Activated B cell treated with CpG ODN at 0.5 μM for 24 hours (primary cell): ENCODE measurements at regions of chr16 and their contacts with region 1.

Region 1: DNA sequence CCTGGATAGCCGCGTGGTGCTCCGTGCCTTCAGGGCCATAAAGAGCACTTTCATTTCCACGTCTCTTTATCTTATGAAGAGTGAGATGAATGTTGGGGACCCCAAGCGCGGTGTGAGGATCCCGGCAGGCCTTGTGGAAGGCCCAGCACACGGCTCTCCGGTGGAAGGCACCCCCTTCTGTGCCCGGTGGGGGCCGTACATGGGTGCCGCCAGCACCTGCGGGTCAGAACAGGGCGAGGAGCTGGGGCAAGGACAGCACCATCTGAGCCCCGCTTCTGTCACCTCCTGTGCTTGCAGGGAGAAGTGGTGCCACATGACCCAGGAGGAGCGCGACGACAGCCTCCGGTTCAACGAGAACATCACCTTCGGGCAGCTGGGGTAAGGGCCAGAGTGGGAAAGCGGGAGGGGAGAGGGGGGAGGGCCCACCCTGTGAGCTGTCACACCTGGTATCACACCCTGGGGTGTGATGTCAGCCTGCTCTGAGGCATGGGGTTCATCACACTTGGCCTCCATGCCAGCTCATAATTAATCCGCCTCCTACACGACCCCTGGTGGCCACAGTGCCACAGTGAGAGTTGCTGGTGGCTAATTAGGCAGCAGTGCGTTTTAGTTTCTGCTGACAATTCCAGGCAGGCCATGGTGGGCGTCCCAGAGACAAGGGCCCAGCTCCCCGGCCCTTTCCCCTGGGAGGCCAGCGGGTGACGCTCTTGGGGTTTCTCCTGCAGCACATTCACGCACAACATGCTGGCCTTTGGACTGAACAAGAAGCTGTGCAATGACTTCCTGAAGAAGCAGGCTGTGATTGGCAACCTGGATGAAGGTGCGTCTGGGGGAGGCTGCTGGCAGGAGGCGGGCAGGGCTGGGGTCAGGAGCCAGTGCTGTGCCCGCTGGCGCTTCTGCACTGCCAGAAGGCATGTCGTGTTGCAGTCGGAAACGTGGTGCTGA is 25.7 kb downstream of the CIBAR2 start:
- DNase-seq: peak; percentile 54
- ATAC-seq: peak; percentile 83
- H3K4me3 Mint-ChIP-seq: no peak overlapping the region
- H3K27ac Mint-ChIP-seq: no peak overlapping the region
- H3K4me1 Mint-ChIP-seq: peaks cover 27% of the 10 kb centered on the region
- H3K27me3 Mint-ChIP-seq: peaks cover 17% of the 10 kb centered on the region
- CTCF ChIP-seq: no peak

Region 2: GRCh38 chr16:84754353-84754856 is 332.2 kb before region 1 on chr16:
- CTCF ChIA-PET with region 1: no interaction called
- POLR2A ChIA-PET with region 1: no interaction called
- intact Hi-C with region 1: loop called (anchors 5 kb)
- DNase-seq: no peak
- ATAC-seq: peak; percentile 86
- H3K4me3 Mint-ChIP-seq: no peak overlapping the region
- H3K27ac Mint-ChIP-seq: no peak overlapping the region
- H3K4me1 Mint-ChIP-seq: peaks cover 67% of the 10 kb centered on the region
- H3K27me3 Mint-ChIP-seq: no peaks in the 10 kb centered on the region
- CTCF ChIP-seq: peak; percentile 77

Region 3: DNA sequence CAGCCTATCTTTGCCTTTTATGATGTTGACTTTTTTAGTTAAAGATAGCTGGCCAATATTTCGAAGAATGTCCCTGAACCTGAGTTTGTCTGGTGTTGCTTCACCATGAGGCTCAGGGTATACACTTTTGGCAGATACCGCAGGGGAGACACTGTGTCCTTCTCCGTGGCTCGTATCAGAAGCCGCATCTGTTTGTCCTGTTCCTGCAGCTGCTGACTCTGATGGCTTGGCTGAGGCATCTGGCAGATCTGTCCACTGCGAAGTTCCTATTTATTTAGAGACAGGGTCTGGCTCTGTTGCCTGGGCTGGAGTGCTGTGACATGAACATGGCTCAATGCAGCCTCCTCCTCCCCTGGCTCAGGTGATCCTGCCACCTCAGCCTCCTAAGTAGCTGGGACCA is 173.3 kb before region 1 on chr16:
- CTCF ChIA-PET with region 1: no interaction called
- POLR2A ChIA-PET with region 1: no interaction called
- intact Hi-C with region 1: no loop called
- DNase-seq: no peak
- ATAC-seq: no peak
- H3K4me3 Mint-ChIP-seq: no peak overlapping the region
- H3K27ac Mint-ChIP-seq: no peak overlapping the region
- H3K4me1 Mint-ChIP-seq: no peaks in the 10 kb centered on the region
- H3K27me3 Mint-ChIP-seq: peaks cover 20% of the 10 kb centered on the region
- CTCF ChIP-seq: no peak

Region 4: DNA sequence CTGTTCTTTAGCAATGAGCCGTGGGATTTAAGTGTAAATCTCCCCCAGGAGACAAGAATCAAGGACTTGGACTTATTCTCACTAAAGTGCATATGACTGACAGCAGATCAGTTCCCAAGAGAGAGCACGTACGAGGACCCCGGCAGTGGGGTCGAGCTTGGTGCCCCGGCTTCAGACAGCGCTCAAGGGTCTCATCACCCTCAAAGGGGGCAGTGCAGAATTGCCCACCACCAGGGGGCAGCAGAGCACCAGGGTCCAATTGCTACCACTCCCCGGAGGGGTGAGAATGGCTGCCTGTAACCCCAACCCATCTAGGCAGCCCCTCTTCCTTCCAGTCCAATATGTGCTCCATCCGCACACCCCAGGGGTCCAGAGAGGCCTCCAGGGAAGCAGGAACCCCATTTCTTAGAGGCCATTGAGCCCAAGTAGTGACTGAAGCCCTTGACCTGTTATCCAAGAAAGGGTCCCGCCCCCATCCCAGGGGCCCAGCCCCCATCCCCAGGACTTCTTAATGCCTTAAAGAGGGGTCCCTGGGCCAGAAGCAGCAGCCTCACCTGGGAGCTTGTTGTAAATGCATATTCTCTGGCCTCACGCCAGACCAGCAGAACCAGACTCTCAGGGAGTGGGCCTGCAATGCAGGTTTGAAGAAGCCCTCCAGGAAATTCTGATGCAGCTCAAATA is 161.4 kb before region 1 on chr16:
- CTCF ChIA-PET with region 1: interaction called, 10 read pairs
- POLR2A ChIA-PET with region 1: no interaction called
- intact Hi-C with region 1: loop called (anchors 1 kb)
- DNase-seq: peak; percentile 62
- ATAC-seq: no peak
- H3K4me3 Mint-ChIP-seq: no peak overlapping the region
- H3K27ac Mint-ChIP-seq: no peak overlapping the region
- H3K4me1 Mint-ChIP-seq: no peaks in the 10 kb centered on the region
- H3K27me3 Mint-ChIP-seq: peaks cover 3% of the 10 kb centered on the region
- CTCF ChIP-seq: no peak

Region 5: DNA sequence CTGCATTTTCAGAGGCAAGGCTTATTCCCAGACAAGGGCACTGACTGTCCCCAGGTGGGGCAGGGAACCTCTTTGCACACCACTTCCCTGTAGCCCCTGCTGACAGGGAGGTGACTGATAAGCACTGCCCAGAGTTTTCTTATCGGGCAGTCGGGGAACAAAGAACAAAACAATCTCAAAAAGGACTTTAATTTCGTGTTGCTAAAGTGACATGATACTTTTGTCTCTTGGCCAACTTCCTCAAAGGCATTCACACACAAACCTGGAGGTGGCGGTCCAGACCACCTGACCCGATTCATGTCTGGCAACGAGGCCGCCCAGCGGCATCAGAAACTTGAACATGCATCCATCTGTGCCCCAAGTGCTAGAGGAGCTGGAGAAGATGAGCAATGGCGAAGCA is 104.2 kb before region 1 on chr16:
- CTCF ChIA-PET with region 1: interaction called, 8 read pairs
- POLR2A ChIA-PET with region 1: no interaction called
- intact Hi-C with region 1: loop called (anchors 5 kb)
- DNase-seq: no peak
- ATAC-seq: no peak
- H3K4me3 Mint-ChIP-seq: no peak overlapping the region
- H3K27ac Mint-ChIP-seq: no peak overlapping the region
- H3K4me1 Mint-ChIP-seq: no peaks in the 10 kb centered on the region
- H3K27me3 Mint-ChIP-seq: no peaks in the 10 kb centered on the region
- CTCF ChIP-seq: no peak

Region 6: DNA sequence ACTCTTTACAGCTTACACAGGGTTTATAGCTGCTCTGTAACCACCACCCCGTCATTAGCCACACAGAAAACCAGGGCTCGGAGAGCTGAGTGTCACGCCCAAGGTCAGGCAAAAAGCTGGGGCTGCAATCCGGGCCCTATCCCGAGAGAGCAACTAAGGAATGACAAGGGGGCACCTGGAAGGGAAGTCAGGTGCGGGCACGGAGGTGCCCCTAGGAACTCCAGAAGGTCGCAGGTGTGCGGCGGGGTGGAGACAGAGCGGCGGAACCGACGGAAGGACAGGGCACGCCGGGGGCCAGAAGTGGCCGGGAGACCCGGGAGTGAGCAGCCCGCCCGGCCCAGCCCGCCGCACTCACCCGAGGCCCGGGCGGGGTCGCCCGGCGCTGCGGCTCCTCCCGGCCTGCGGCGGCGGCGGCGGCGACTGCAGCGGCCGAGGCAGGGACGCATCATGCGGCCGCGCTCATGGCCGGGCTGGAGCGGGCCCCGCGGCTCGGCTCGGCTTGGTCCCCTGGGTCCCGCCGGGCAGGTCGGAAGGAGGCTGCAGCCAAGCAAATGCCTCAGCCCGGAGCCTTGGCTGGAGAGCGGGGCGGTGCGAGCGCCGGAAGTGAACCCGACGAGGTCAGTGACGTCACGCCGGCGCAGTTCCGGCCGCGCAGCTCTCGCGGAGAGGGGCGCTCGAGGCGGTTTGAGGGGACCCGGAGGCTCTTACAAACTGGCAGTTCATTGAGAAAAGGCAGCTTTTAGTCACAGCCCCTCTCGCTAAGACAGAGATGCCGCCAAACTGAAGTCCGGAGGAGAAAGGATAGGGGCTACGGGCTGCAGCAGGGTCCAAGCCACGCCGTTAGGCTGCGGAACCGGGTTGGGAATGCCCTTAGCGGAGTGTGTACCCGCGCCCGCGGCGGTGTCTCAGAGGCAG is 75.4 kb before region 1 on chr16 and contains the start of gene ZDHHC7:
- CTCF ChIA-PET with region 1: interaction called, 5 read pairs
- POLR2A ChIA-PET with region 1: interaction called, 3 read pairs
- intact Hi-C with region 1: loop called (anchors 5 kb)
- DNase-seq: peak; percentile 80
- ATAC-seq: peak; percentile 89
- H3K4me3 Mint-ChIP-seq: peak within 1 kb of the TSS; percentile 97
- H3K27ac Mint-ChIP-seq: peak within 1 kb of the TSS; percentile 98
- H3K4me1 Mint-ChIP-seq: peaks cover 38% of the 10 kb centered on the region
- H3K27me3 Mint-ChIP-seq: peaks cover 11% of the 10 kb centered on the region
- CTCF ChIP-seq: no peak
- total RNA-seq, gene ZDHHC7: 24.4 and 26.9 TPM in 2 replicates

Region 7: DNA sequence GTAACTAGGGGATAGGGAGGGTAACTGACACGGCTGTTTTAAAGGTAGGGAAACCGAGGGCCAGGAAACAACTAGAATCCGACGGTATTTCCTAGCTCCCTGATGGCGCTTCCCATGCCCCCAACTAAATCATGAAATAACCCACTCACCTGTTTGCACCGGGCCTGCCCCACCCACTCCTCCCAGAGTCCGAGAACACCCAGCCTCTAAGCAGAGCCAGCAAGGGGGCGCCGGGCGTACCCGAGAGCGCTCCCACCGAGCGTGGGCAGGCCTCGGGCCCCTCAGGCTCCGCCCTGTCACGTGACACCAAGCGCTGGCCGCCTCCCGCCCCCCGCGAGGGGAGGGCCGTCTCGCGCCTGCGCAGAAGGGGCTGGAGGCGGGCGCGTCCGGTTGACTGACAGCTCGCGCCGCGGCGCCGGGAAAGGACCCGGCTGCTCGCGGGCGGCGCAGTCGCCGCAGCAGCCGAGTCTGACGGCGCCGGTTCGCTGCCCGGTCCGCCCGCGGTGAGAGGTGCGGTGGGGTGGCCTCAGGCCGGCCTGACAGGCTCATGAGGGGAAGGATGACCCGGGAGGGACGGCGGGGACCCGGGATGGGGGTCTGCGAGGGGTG is 59.2 kb before region 1 on chr16 and contains the start of gene KIAA0513:
- CTCF ChIA-PET with region 1: interaction called, 8 read pairs
- POLR2A ChIA-PET with region 1: no interaction called
- intact Hi-C with region 1: loop called (anchors 5 kb)
- DNase-seq: peak; percentile 99
- ATAC-seq: peak; percentile 87
- H3K4me3 Mint-ChIP-seq: peak within 1 kb of the TSS; percentile 89
- H3K27ac Mint-ChIP-seq: peak within 1 kb of the TSS; percentile 88
- H3K4me1 Mint-ChIP-seq: peaks cover 42% of the 10 kb centered on the region
- H3K27me3 Mint-ChIP-seq: peaks cover 11% of the 10 kb centered on the region
- CTCF ChIP-seq: no peak
- total RNA-seq, gene KIAA0513: 0.62 and 1.1 TPM in 2 replicates

Region 8: DNA sequence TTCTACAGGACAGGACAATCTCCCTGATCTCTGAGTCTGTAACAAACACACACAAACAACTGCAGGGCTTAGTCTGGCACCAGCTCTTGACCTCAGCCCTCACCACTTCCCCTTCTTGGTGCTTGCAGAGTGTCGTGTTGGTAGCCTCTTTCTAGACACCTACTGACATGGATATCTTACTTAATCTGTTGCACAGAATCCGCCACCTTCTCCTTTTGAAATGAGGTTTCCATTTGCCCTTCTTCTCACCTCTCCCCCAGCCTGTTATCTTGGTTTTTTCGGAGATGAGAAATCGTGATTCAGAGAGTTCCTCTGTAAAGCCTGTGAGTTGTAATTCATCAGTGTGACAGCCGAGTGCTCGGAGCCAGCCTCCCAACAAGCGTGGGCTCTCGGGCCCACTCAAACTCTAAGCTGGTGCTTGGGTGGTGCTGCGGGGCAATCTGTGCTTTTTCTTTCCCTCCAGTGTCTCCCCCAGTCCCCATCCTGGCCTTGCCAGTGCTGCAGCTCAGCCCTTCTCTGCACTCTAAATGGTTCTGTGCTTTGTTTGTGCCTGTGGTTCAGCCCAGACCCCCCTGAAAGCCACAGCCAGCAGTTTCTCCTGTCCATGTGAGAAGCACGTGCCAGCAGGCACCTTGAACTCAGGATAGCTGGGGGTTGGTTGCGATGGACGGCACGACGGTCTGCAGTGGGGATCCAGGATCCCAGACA is 31.0 kb before region 1 on chr16:
- CTCF ChIA-PET with region 1: interaction called, 4 read pairs
- POLR2A ChIA-PET with region 1: no interaction called
- intact Hi-C with region 1: loop called (anchors 2 kb)
- DNase-seq: no peak
- ATAC-seq: peak; percentile 89
- H3K4me3 Mint-ChIP-seq: peak overlapping the region; percentile 78
- H3K27ac Mint-ChIP-seq: peak overlapping the region; percentile 84
- H3K4me1 Mint-ChIP-seq: peaks cover 38% of the 10 kb centered on the region
- H3K27me3 Mint-ChIP-seq: peaks cover 8% of the 10 kb centered on the region
- CTCF ChIP-seq: no peak